ENCODE measurements at regions of chr1 and their contacts with region 1.

Region 1: DNA sequence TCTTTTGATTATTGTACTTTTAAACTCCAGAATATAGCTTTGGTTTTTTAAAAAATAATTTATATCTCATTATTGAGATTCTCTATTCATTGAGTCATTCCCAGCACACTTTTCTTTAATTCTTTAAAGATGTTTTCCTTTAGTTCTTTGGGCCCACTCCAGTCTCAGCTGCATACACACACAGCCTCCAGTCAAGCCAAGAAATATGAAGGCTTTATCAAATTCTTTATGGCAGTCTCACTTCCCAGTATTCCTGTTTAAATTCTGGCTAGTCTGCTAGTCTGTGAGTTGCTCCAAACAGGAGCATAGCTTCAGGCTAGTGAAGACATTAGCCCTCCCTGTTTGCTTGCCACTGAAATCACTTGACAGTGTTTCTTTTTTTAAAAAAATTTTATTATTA is 61.2 kb downstream of the CRP start:
- DNase-seq: no peak
- ATAC-seq: no peak

Region 2: GRCh38 chr1:157819896-157820295 is 1833.3 kb before region 1 on chr1 and contains the start of gene FCRL1:
- intact Hi-C with region 1: loop called (anchors 5 kb)
- DNase-seq: no peak
- ATAC-seq: no peak
- total RNA-seq, gene FCRL1: 1.4 TPM

Measured in sciatic nerve (tissue), 2 donors.